HEK293T (cell line): ENCODE measurements at regions of chr10 and their contacts with region 1.

Region 1: DNA sequence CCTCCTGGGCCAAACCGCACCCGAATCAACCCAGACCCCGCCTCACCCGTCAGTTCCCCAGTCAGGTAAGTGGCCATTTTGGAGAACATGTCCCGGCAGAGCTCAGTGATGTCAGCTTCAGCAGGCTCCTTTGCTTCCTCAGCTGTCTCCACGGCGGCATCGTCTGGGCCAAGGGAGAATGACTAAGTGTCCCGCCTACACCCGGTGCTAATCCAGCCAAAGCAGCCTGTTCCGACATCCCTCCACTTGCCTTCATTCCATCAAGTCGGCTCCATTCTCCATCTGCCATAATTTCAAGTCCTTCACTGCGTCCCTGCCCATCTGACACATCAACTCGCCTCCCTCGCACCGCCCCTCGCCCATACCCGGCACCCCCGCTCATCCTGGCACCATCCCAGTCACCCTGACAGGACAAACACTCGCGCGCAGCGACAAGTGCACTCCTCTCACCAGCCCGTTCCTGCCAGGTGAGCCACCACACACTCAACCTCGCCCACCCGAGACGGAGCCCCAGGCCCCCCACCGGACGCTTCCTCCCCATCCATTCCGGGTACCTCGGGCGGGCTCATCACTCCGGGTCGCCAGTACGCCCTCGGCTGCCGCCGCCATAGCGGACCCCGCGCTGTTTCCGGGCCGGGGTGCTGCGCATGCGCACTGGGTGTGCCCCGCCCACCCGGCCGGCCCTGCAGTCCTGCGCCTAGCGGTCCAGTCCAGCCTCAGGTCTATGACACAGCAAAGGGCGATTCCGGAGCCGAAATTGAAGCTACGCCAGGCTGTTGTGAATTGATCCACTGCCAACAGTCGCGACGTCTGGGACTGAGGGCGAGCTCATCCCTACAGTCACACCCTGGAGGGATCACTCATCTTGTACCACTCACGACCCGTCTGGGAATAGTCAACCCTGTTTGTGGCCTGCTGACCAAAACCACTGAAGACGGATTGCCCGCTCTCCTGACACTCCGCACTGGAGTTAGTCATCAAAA is at the start of gene BLOC1S2:
- DNase-seq: peak; percentile 99

Region 2: GRCh38 chr10:100072514-100072913 is 213.8 kb before region 1 on chr10:
- CTCF ChIA-PET with region 1: no interaction called
- POLR2A ChIA-PET with region 1: no interaction called
- DNase-seq: no peak

Region 3: DNA sequence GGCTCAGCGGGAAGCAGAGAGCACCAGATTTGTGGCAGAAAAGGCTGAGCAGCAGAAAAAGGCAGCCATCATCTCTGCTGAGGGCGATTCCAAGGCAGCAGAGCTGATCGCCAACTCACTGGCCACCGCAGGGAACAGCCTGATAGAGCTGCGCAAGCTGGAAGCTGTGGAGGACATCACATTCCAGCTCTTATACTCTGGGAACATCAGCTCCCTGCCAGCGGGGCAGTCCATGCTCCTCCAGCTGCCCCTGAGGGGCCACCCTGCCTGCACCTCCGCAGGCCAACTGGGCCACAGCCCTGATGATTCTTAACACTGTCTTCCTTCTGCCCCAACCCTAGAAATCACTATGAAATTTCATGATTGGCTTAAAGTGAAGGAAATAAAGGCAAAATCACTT is 37.5 kb before region 1 on chr10:
- CTCF ChIA-PET with region 1: no interaction called
- POLR2A ChIA-PET with region 1: no interaction called
- DNase-seq: no peak

Region 4: GRCh38 chr10:100267237-100268104 is 18.9 kb before region 1 on chr10 and contains the start of gene CWF19L1:
- CTCF ChIA-PET with region 1: no interaction called
- POLR2A ChIA-PET with region 1: interaction called, 16 read pairs
- DNase-seq: peak; percentile 92

Region 5: GRCh38 chr10:100297242-100297641 is 10.9 kb after region 1 on chr10:
- CTCF ChIA-PET with region 1: no interaction called
- POLR2A ChIA-PET with region 1: interaction called, 25 read pairs
- DNase-seq: no peak